Esophagus squamous epithelium (tissue), 5 donors: ENCODE measurements at regions of chr20 and their contacts with region 1.

Region 1: GRCh38 chr20:10476319-10476724 is 41.2 kb downstream of the SLX4IP start:
- DNase-seq: no peak
- H3K4me3 ChIP-seq: no peak overlapping the region
- H3K27ac ChIP-seq: no peak overlapping the region
- H3K4me1 ChIP-seq: peaks cover 6 to 21% (median 7%) of the 10 kb centered on the region in 3 donors
- H3K27me3 ChIP-seq: no peaks in the 10 kb centered on the region
- CTCF ChIP-seq: no peak
- POLR2A ChIP-seq: no peak

Region 2: DNA sequence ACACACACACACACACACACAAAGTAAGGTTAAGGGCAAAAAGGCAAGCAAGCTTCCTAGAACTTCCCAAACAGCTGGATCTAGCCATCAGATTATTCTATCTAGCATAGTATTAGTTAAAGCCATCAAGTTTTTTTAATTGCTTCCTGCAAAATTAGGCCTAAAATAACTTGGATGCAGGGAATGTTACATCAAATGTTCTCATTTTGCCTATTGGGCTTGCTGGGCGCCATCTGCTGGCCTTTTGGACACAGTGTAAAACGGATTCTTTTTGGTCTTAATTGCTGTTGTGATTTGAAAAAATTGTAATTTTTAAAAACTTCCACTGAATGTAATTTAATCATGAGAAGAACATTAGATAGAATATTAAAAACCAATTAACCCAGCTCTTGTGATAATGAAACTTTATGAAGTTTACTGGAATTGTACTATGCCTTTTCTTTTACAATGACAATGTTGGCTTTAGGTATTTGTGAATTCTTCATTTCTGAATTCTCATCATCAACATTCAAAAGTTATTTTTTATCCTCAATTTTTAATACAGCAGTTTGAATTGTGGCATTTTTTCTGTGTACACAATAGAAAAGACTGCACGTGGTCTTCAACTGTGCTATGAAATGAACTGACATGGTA is 49.1 kb before region 1 on chr20:
- intact Hi-C with region 1: no loop called
- DNase-seq: no peak
- H3K4me3 ChIP-seq: no peak overlapping the region
- H3K27ac ChIP-seq: no peak overlapping the region
- H3K4me1 ChIP-seq: peaks cover 0 to 55% (median 11%) of the 10 kb centered on the region in 3 donors
- H3K27me3 ChIP-seq: no peaks in the 10 kb centered on the region
- CTCF ChIP-seq: peak; percentile 25 to 78 (median 63)
- POLR2A ChIP-seq: no peak

Region 3: DNA sequence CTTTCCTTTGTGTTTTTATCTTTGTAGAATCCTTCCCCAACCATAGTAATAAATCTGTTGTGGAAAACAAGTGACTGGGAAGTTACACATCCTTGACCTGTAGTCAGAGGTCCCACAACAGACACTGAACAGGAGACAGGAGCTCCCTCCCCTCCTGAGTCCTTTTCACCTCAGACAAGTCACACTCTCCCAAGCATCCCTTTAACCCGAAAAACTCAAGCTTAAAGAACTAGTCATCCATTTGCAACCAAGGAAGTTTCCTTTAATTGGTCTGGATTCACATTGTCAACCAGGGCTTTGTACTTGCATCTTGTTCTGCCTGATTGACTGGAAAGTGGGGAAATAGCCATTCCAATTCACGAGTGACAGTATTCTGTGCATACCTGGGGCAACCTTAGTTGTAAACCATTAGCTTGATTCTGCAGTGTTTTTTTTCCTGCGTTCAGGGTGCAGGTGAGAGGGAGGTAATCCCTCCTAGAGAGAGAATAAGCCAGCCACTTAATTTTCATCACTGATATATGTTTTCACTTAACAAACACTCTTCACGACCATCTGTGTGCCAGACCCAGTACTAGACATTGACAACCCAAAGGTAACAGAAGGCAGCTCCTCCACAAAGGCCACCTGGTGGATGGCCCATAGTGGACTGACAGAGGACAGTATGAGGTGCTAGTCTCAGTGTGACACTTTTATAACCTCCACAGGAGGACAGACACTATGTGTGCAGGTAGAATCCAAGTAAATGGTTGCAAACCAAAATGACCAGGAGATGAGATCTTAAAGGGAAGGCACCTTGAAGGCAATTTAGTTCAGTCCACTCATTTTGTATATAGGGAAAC is 71.2 kb after region 1 on chr20:
- intact Hi-C with region 1: loop called (anchors 5 kb)
- DNase-seq: no peak
- H3K4me3 ChIP-seq: no peak overlapping the region
- H3K27ac ChIP-seq: peak overlapping the region in 1 of 4 donors; percentile 47
- H3K4me1 ChIP-seq: peaks cover 0 to 46% (median 7%) of the 10 kb centered on the region in 3 donors
- H3K27me3 ChIP-seq: no peaks in the 10 kb centered on the region
- CTCF ChIP-seq: no peak
- POLR2A ChIP-seq: no peak